ENCODE measurements at regions of chr13 and their contacts with region 1.

Region 1: DNA sequence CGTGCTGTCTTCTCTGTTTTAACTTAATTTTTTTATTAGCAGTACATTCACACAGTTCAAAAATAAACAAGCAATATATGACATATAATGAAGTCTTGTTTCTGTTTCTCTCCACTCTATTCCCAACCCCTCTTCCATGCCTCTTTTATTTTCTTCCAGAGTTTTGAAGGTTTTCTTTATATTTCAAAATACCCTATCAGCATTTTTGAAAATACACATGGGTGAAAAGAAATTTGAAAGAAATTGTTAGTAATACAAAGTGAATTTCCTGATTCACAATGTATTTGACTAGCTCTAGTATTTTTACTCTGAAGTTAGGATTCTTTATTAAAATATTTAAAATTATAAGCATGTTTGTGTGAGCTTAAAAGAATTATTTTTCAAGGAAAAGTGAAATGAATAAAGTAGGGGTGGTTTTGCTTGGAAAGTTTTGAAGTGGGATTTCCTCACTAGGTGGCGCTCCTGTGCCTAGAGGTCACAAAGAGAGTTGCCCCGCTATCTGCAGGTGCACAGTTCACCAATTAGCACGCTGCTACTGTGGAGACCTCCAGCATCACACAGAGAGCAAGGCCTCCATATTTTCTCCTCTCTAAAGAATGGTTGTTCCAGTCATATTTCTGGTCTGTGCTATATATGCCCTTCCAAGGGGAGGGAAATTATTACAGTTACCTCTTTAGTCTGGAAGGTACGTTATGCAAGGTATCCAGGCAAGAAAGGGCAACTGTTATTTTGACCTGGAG is 37.6 kb downstream of the SOX21 start:
- DNase-seq: no peak
- ATAC-seq: no peak
- H3K4me3 ChIP-seq: no peak overlapping the region
- H3K27ac ChIP-seq: no peak overlapping the region
- H3K4me1 ChIP-seq: no peaks in the 10 kb centered on the region
- H3K27me3 ChIP-seq: no peaks in the 10 kb centered on the region
- CTCF ChIP-seq: peak in 3 of 5 experiments; percentile 23 to 60 (median 48)
- POLR2A ChIP-seq: no peak

Region 2: DNA sequence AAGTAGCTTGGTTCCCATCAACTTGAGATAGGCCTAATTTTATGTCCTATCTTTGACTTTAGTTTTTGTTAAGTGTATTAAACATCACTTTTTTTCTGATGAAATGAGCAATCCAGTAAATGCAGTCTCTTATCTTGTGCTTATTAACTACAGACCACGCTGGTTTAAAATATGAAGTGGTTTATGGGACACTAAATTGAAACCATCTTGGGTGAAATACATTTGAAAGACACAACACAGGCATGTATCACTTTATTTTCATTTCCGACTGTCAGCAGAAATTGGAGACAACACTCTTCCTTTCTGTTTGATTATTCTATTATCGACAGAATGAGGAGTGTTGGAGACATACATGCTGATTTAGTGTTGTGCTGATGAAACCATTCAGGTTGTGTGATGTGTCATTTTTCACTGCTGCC is 1000.4 kb before region 1 on chr13:
- in situ Hi-C with region 1: no loop called
- intact Hi-C with region 1: no loop called
- DNase-seq: no peak
- ATAC-seq: no peak
- H3K4me3 ChIP-seq: no peak overlapping the region
- H3K27ac ChIP-seq: no peak overlapping the region
- H3K4me1 ChIP-seq: no peaks in the 10 kb centered on the region
- H3K27me3 ChIP-seq: no peaks in the 10 kb centered on the region
- CTCF ChIP-seq: no peak
- POLR2A ChIP-seq: no peak

Region 3: DNA sequence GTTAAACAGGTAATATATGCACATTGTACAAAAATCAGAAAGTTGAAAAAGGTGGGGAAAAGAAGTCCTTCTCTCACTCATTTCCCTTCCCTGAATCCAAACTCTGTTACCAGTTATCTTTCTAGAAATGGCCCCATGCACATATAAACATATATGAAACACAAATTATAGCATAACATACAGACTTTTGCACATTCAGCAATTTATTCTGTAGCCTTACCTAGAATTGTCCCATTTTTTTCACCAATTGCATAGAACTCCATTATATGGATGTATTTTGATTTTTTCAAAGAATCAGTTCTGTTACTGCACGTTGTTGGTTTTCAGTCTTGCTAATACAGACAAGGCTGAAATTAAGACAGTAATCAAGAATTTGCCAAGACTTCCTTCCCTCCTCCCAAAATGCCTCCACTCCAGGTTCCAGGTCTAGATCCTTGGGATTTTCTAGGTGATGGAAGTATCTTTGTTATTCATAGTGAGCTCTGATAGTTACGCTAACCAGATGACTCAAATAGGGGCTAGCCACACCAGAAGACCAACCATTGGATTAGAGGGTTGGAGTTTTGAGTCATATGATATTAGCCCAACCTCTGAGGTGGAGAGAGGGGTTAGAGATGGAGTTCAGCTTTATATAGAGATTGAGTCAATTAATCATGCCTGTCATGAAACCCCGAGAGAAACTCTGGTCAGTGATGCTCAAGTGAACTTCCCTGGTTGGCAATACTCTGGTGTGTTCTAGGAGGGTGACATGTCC is 42.4 kb before region 1 on chr13:
- in situ Hi-C with region 1: no loop called
- intact Hi-C with region 1: no loop called
- DNase-seq: no peak
- ATAC-seq: no peak
- H3K4me3 ChIP-seq: no peak overlapping the region
- H3K27ac ChIP-seq: no peak overlapping the region
- H3K4me1 ChIP-seq: no peaks in the 10 kb centered on the region
- H3K27me3 ChIP-seq: no peaks in the 10 kb centered on the region
- CTCF ChIP-seq: no peak
- POLR2A ChIP-seq: no peak

Region 4: GRCh38 chr13:94917824-94918223 is 243.0 kb after region 1 on chr13:
- in situ Hi-C with region 1: no loop called
- intact Hi-C with region 1: no loop called
- DNase-seq: no peak
- ATAC-seq: no peak
- H3K4me3 ChIP-seq: no peak overlapping the region
- H3K27ac ChIP-seq: no peak overlapping the region
- H3K4me1 ChIP-seq: no peaks in the 10 kb centered on the region
- H3K27me3 ChIP-seq: no peaks in the 10 kb centered on the region
- CTCF ChIP-seq: no peak
- POLR2A ChIP-seq: no peak

Region 5: GRCh38 chr13:95137096-95137495 is 462.3 kb after region 1 on chr13:
- in situ Hi-C with region 1: loop called in 1 of 4 experiments (anchors 25 kb)
- intact Hi-C with region 1: no loop called
- DNase-seq: no peak
- ATAC-seq: no peak
- H3K4me3 ChIP-seq: no peak overlapping the region
- H3K27ac ChIP-seq: no peak overlapping the region
- H3K4me1 ChIP-seq: no peaks in the 10 kb centered on the region
- H3K27me3 ChIP-seq: no peaks in the 10 kb centered on the region
- CTCF ChIP-seq: no peak
- POLR2A ChIP-seq: no peak

Region 6: GRCh38 chr13:95156208-95156607 is 481.4 kb after region 1 on chr13:
- in situ Hi-C with region 1: no loop called
- intact Hi-C with region 1: loop called (anchors 10 kb)
- DNase-seq: no peak
- ATAC-seq: no peak
- H3K4me3 ChIP-seq: no peak overlapping the region
- H3K27ac ChIP-seq: no peak overlapping the region
- H3K4me1 ChIP-seq: no peaks in the 10 kb centered on the region
- H3K27me3 ChIP-seq: no peaks in the 10 kb centered on the region
- CTCF ChIP-seq: peak in 1 of 5 experiments; percentile 9
- POLR2A ChIP-seq: no peak

Region 7: GRCh38 chr13:95403828-95404522 is 729.2 kb after region 1 on chr13:
- in situ Hi-C with region 1: loop called in 1 of 4 experiments (anchors 25 kb)
- intact Hi-C with region 1: loop called (anchors 10 kb)
- DNase-seq: peak; percentile 50 to 69
- ATAC-seq: peak; percentile 88 to 91
- H3K4me3 ChIP-seq: peak overlapping the region; percentile 22 to 60 (median 48)
- H3K27ac ChIP-seq: no peak overlapping the region
- H3K4me1 ChIP-seq: peaks cover 0 to 5% of the 10 kb centered on the region in 2 donors
- H3K27me3 ChIP-seq: no peaks in the 10 kb centered on the region
- CTCF ChIP-seq: peak; percentile 85 to 93 (median 92)
- POLR2A ChIP-seq: no peak